ENCODE measurements at regions of chr7 and their contacts with region 1.

Region 1: DNA sequence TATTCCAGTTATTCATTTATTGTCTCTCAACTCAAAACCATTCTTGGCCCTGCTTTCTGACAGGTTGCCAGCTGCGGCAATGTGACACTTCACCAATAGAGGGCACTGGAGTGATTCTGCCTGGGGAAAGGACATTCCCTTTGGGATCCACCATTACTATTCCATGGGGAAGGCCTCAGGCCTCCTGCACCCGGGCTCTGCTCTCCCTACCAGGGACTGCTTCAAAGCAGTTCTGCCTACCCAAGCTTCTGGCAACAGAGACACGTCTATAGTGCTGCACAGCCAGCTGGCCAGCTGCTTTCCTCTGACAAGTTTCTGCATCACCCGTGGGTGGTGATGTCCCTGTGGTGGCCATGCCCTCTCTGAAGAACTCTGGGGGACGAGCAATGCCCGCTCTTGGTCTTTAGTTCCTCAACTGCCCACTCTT is 163.8 kb downstream of the ELMO1 start:
- DNase-seq: peak; percentile 25
- ATAC-seq: no peak
- H3K4me3 Mint-ChIP-seq: no peak overlapping the region
- H3K27ac Mint-ChIP-seq: no peak overlapping the region
- H3K4me1 Mint-ChIP-seq: peaks cover 50% of the 10 kb centered on the region
- H3K27me3 Mint-ChIP-seq: no peaks in the 10 kb centered on the region
- CTCF ChIP-seq: peak; percentile 33

Region 2: GRCh38 chr7:37225285-37225969 is 59.4 kb before region 1 on chr7:
- CTCF ChIA-PET with region 1: no interaction called
- POLR2A ChIA-PET with region 1: no interaction called
- intact Hi-C with region 1: no loop called
- DNase-seq: no peak
- ATAC-seq: no peak
- H3K4me3 Mint-ChIP-seq: no peak overlapping the region
- H3K27ac Mint-ChIP-seq: no peak overlapping the region
- H3K4me1 Mint-ChIP-seq: no peaks in the 10 kb centered on the region
- H3K27me3 Mint-ChIP-seq: no peaks in the 10 kb centered on the region
- CTCF ChIP-seq: no peak

Region 3: DNA sequence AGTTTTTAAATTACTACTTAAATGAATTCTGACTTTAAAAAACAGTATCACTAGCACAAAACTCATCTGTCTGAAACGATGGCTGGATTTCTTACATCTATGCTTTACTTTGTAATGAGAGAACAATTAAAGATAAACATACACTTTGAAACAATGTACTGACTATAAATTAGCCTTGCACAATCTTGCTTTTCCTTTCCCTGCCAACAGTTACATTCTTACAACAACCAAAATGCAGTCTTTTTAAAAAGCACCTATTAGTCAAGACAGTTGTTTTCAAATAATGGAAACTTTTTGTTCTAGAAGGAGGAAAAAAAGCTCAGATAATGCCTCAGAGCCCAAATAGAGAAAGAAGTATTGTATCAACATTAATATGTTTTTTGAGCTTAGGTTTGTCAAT is 10.6 kb after region 1 on chr7:
- CTCF ChIA-PET with region 1: interaction called, 10 read pairs
- POLR2A ChIA-PET with region 1: no interaction called
- intact Hi-C with region 1: no loop called
- DNase-seq: no peak
- ATAC-seq: no peak
- H3K4me3 Mint-ChIP-seq: no peak overlapping the region
- H3K27ac Mint-ChIP-seq: no peak overlapping the region
- H3K4me1 Mint-ChIP-seq: peaks cover 16% of the 10 kb centered on the region
- H3K27me3 Mint-ChIP-seq: no peaks in the 10 kb centered on the region
- CTCF ChIP-seq: no peak

Region 4: DNA sequence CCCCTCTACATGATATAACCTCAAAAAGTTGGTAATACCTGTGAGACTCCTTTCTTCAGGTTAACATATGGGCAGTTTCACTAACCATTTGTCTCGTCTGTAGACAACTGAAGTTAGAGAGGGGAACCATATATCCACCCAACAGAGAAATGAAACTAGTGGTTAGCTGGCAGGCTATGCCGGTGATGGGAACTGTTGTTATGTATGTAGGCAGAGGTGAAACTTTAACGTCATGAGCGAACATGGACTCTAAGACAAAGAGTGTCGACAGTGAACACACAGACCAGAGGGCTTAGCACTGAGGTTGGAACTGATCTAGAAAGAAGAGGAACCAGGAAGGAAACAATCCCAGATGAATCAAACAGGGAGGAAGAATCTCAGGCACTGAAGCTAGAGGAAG is 51.4 kb after region 1 on chr7:
- CTCF ChIA-PET with region 1: interaction called, 34 read pairs
- POLR2A ChIA-PET with region 1: interaction called, 3 read pairs
- intact Hi-C with region 1: no loop called
- DNase-seq: no peak
- ATAC-seq: peak; percentile 92
- H3K4me3 Mint-ChIP-seq: peak overlapping the region; percentile 77
- H3K27ac Mint-ChIP-seq: peak overlapping the region; percentile 95
- H3K4me1 Mint-ChIP-seq: peaks cover 83% of the 10 kb centered on the region
- H3K27me3 Mint-ChIP-seq: no peaks in the 10 kb centered on the region
- CTCF ChIP-seq: no peak

Region 5: DNA sequence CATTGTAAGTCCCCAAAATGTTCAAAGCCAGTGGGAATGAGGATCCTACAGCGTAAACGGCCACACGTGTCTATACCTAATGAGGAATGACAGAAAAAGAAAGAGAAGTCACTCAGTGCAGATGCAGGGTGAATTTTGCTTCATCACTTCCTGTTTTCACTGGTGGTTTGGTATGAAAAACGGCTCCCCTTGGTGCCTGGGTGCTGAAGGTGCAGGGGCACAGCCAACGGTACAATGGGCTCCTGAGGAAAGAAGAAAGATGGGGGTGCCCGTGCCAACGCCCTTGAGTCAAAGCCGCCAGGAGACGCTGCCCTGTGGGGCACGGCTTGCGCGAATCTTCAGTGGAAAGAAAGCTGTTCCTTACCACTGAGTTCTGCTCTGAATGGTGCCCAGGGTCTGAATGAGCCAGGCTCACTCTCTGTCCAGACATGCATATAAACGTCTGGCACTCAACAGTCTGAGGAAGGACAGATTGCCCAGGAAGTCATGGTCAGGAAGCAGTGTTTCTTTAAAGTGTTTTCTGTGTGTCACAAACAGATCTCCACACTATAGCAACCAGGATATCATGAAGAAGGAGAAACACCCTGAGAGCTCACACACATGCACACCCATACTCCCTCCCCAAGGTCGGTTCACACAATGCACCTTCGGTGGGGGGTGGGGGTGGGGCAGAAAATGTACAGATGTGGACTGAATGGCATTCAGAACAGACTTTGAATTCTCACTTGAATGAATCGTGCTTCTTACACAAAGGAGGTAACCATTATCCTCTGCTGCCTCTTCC is 58.1 kb after region 1 on chr7:
- CTCF ChIA-PET with region 1: interaction called, 34 read pairs
- POLR2A ChIA-PET with region 1: no interaction called
- intact Hi-C with region 1: loop called (anchors 1 kb)
- DNase-seq: peak; percentile 59
- ATAC-seq: peak; percentile 86
- H3K4me3 Mint-ChIP-seq: peak overlapping the region; percentile 98
- H3K27ac Mint-ChIP-seq: peak overlapping the region; percentile 98
- H3K4me1 Mint-ChIP-seq: peaks cover 85% of the 10 kb centered on the region
- H3K27me3 Mint-ChIP-seq: no peaks in the 10 kb centered on the region
- CTCF ChIP-seq: no peak

Region 6: GRCh38 chr7:37495574-37496184 is 210.9 kb after region 1 on chr7:
- CTCF ChIA-PET with region 1: interaction called, 11 read pairs
- POLR2A ChIA-PET with region 1: no interaction called
- intact Hi-C with region 1: loop called (anchors 1 kb)
- DNase-seq: no peak
- ATAC-seq: peak; percentile 58
- H3K4me3 Mint-ChIP-seq: no peak overlapping the region
- H3K27ac Mint-ChIP-seq: no peak overlapping the region
- H3K4me1 Mint-ChIP-seq: no peaks in the 10 kb centered on the region
- H3K27me3 Mint-ChIP-seq: no peaks in the 10 kb centered on the region
- CTCF ChIP-seq: peak; percentile 91

Region 7: GRCh38 chr7:37510043-37510634 is 225.3 kb after region 1 on chr7:
- CTCF ChIA-PET with region 1: interaction called, 3 read pairs
- POLR2A ChIA-PET with region 1: no interaction called
- intact Hi-C with region 1: loop called (anchors 5 kb)
- DNase-seq: no peak
- ATAC-seq: peak; percentile 60
- H3K4me3 Mint-ChIP-seq: no peak overlapping the region
- H3K27ac Mint-ChIP-seq: no peak overlapping the region
- H3K4me1 Mint-ChIP-seq: no peaks in the 10 kb centered on the region
- H3K27me3 Mint-ChIP-seq: peaks cover 14% of the 10 kb centered on the region
- CTCF ChIP-seq: no peak

Measured in activated B cell treated with CpG ODN at 0.5 μM for 24 hours (primary cell).